Adrenal gland (tissue), 19 donors: ENCODE measurements at regions of chr15 and their contacts with region 1.

Region 1: GRCh38 chr15:90086868-90087268 is 15.4 kb downstream of the IDH2 start:
- DNase-seq: peak in 4 of 7 donors; percentile 54 to 71 (median 60)
- H3K4me3 ChIP-seq: no peak overlapping the region
- H3K27ac ChIP-seq: no peak overlapping the region
- H3K4me1 ChIP-seq: no peaks in the 10 kb centered on the region
- H3K27me3 ChIP-seq: no peaks in the 10 kb centered on the region
- CTCF ChIP-seq: peak; percentile 43 to 72 (median 60)
- POLR2A ChIP-seq: no peak

Region 2: DNA sequence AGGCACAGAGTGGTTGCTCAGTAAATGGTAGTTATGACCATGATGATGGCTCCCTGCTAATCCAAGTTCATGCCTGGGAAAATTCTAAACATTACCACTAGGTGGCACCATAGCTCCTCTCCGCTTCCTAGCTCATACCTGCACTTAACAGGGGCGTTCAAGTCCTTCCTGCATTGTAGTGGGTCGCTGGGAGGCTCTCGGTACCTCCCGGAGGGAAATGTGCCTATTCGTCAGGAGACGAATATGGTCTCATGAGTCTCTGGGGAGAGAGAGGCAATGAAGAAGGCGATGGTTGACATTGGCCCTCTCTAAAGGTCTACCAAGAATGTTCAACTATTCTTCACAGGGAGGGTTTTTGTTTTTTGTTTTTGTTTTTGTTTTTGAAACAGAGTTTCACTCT is 346.7 kb before region 1 on chr15:
- intact Hi-C with region 1: loop called in 1 of 2 experiments (anchors 10 kb)
- DNase-seq: peak; percentile 34 to 78 (median 60)
- H3K4me3 ChIP-seq: no peak overlapping the region
- H3K27ac ChIP-seq: no peak overlapping the region
- H3K4me1 ChIP-seq: no peaks in the 10 kb centered on the region
- H3K27me3 ChIP-seq: no peaks in the 10 kb centered on the region
- CTCF ChIP-seq: peak; percentile 77 to 97 (median 89)
- POLR2A ChIP-seq: no peak

Region 3: DNA sequence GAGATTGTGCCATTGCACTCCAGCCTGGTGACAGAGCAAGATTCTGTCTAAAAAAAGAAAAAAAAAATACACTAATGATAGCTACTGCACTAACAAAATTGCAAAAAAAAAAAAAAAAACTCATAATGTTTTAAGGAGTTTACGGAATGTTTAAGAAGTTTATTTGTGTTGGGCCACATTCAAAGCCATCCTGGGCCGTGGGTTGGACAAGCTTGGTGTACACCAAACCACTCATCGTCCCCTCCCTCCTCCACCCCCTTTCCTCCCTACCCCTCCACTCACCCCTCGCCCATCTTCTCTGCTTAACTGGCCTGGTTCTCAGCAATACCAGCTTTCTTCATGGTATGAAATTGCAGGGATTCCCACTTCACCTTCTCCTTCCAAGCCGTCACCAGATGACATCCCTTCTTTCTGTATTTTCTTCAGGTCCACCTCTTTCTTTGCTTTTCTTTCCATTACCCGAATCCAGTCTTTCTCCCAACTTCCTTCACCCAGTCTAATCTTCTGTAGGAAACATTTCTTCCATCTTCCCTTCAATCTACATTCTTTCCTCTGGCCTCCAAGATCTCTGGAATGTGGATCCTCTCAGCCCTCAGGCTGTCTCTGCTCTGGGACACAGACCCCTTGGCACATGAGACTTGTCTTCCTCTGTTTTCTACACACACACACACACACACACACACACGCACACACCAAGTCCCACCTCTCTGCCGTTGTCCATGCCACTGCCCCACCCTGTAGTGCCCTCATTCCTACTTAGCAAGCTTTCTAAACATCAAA is 332.3 kb before region 1 on chr15:
- intact Hi-C with region 1: loop called (anchors 5 to 10 kb)
- DNase-seq: no peak
- H3K4me3 ChIP-seq: no peak overlapping the region
- H3K27ac ChIP-seq: no peak overlapping the region
- H3K4me1 ChIP-seq: peaks cover 5 to 12% of the 10 kb centered on the region in 2 donors
- H3K27me3 ChIP-seq: no peaks in the 10 kb centered on the region
- CTCF ChIP-seq: no peak
- POLR2A ChIP-seq: no peak

Region 4: GRCh38 chr15:89904519-89904918 is 182.3 kb before region 1 on chr15:
- intact Hi-C with region 1: loop called in 1 of 2 experiments (anchors 10 kb)
- DNase-seq: peak in 1 of 7 donors; percentile 42
- H3K4me3 ChIP-seq: no peak overlapping the region
- H3K27ac ChIP-seq: no peak overlapping the region
- H3K4me1 ChIP-seq: no peaks in the 10 kb centered on the region
- H3K27me3 ChIP-seq: no peaks in the 10 kb centered on the region
- CTCF ChIP-seq: no peak
- POLR2A ChIP-seq: no peak

Region 5: GRCh38 chr15:90001683-90002427 is 85.0 kb before region 1 on chr15:
- intact Hi-C with region 1: no loop called
- DNase-seq: peak in 6 of 7 donors; percentile 46 to 59 (median 56)
- H3K4me3 ChIP-seq: peak overlapping the region; percentile 26 to 94 (median 72)
- H3K27ac ChIP-seq: peak overlapping the region in 4 of 5 donors; percentile 71 to 96 (median 84)
- H3K4me1 ChIP-seq: peaks cover 27 to 37% of the 10 kb centered on the region in 2 donors
- H3K27me3 ChIP-seq: no peaks in the 10 kb centered on the region
- CTCF ChIP-seq: no peak
- POLR2A ChIP-seq: no peak